Caco-2 (cell line): ENCODE measurements at regions of chr2 and their contacts with region 1.

Region 1: DNA sequence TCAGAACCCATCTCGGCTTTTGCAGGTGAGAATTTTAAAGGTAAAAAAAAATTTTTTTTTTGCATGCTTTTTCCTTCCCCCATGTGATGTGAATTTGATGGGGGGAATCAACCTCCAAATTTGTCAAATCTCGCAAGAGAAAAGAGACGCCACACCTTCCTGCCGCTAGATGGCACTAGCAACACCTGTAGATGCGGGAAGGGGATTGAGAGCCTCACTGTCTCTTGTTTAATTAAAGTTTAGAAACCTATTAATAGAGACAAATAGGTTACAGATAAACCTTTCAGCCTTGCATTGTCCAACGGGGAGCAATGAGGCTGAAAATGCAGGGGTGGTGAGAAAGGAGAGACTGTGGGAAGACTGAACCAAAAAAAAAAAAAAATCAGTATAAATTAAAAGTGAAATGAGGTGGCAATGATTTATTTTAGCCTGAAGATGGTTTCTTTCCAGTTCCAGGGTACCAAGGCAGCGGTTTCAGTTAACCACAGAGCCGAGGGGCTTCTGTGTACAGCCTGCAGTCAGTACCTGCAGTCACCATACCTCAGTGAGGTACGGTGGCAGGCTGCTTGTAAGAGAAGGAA is 84.6 kb downstream of the NRP2 start:
- DNase-seq: peak; percentile 61 to 65
- H3K4me3 ChIP-seq: no peak overlapping the region
- H3K4me3 Mint-ChIP-seq: no peak overlapping the region
- H3K27ac Mint-ChIP-seq: peak overlapping the region; percentile 52
- H3K4me1 ChIP-seq: peaks cover 32% of the 10 kb centered on the region
- H3K4me1 Mint-ChIP-seq: peaks cover 31% of the 10 kb centered on the region
- H3K27me3 ChIP-seq: no peaks in the 10 kb centered on the region
- H3K27me3 Mint-ChIP-seq: no peaks in the 10 kb centered on the region
- CTCF ChIP-seq: peak; percentile 93 to 96

Region 2: DNA sequence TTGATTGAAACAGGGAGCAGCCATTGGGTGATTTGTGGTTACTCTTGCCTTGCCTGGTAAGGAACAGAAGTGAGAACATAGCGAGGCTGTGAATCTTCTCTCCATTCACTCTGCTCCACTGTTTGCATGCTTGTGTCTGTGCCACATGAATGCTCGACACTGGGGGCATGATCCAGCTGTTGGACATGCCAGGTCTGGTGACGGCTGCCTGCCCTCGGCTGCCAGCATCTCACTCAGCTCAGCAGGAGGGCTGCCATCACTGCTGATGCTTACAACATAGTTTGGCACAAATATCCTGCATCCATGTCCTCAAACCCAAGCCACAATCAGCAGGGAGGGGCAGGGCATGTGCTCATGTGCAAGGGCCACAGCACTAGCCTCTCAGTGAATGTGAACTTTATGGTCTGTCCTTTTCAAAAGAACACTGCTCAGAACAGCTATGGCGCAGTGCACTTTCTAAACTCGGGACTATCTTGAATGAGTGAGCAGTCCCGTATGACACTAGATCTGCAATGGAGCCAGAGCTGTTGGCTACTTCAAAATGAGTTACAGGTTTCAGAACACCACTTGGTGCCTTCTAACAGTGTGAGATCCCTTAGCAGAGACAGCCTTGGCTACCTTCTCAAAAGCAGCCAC is 41.7 kb after region 1 on chr2:
- CTCF ChIA-PET with region 1: no interaction called
- POLR2A ChIA-PET with region 1: no interaction called
- intact Hi-C with region 1: loop called (anchors 1 kb)
- DNase-seq: no peak
- H3K4me3 ChIP-seq: no peak overlapping the region
- H3K4me3 Mint-ChIP-seq: no peak overlapping the region
- H3K27ac Mint-ChIP-seq: no peak overlapping the region
- H3K4me1 ChIP-seq: peaks cover 10% of the 10 kb centered on the region
- H3K4me1 Mint-ChIP-seq: peaks cover 15% of the 10 kb centered on the region
- H3K27me3 ChIP-seq: no peaks in the 10 kb centered on the region
- H3K27me3 Mint-ChIP-seq: no peaks in the 10 kb centered on the region
- CTCF ChIP-seq: no peak

Region 3: DNA sequence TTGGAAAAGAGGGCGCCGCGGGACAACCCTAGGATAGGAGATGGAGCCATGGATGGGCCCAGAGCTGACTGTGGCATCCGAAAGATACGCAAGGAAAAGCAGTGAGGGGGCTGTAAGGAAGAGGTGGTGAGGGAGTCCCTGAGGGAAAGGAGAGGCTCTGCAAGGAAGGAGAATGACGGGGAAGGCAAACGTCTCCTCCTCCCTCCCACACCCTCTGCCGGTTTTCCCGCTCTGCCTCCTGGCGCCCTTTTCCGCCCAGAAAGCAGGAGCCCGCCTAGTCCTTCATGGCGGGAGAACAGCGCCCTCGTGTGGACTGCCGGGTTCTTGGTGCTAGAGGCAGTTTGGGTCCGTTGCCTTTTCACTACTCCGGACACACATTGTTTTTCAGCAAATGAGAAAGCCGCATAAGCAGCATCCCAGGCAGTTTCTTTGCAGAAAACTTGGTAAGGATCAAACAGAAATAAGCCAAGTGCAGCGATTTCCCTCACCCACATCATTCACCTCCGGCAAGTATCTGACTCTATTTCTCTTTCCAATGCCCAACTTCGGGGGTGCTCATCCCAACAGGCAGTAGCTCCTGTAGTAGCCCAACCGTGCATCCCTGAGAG is 118.7 kb after region 1 on chr2:
- CTCF ChIA-PET with region 1: no interaction called
- POLR2A ChIA-PET with region 1: no interaction called
- intact Hi-C with region 1: loop called (anchors 1 kb)
- DNase-seq: peak; percentile 81 to 86
- H3K4me3 ChIP-seq: no peak overlapping the region
- H3K4me3 Mint-ChIP-seq: no peak overlapping the region
- H3K27ac Mint-ChIP-seq: no peak overlapping the region
- H3K4me1 ChIP-seq: no peaks in the 10 kb centered on the region
- H3K4me1 Mint-ChIP-seq: no peaks in the 10 kb centered on the region
- H3K27me3 ChIP-seq: no peaks in the 10 kb centered on the region
- H3K27me3 Mint-ChIP-seq: peaks cover 3% of the 10 kb centered on the region
- CTCF ChIP-seq: peak; percentile 77 to 90